HCT116 (cell line): ENCODE measurements at regions of chr15 and their contacts with region 1.

Region 1: GRCh38 chr15:88476635-88477060 is 9.1 kb downstream of the MRPS11 start:
- DNase-seq: peak; percentile 15
- ATAC-seq: peak; percentile 79
- H3K4me3 ChIP-seq: no peak overlapping the region
- H3K27ac ChIP-seq: no peak overlapping the region
- H3K4me1 ChIP-seq: no peaks in the 10 kb centered on the region
- H3K27me3 ChIP-seq: no peaks in the 10 kb centered on the region
- CTCF ChIP-seq: peak; percentile 58 to 73 (median 62)
- POLR2A ChIP-seq: no peak
- RAD21 ChIP-seq: peak; percentile 81

Region 2: GRCh38 chr15:88393719-88394519 is 82.7 kb before region 1 on chr15:
- CTCF ChIA-PET with region 1: no interaction called
- POLR2A ChIA-PET with region 1: no interaction called
- RAD21 ChIA-PET with region 1: no interaction called
- intact Hi-C with region 1: no loop called
- DNase-seq: no peak
- ATAC-seq: no peak
- H3K4me3 ChIP-seq: no peak overlapping the region
- H3K27ac ChIP-seq: no peak overlapping the region
- H3K4me1 ChIP-seq: no peaks in the 10 kb centered on the region
- H3K27me3 ChIP-seq: 0 out of 2 replicates have a peak, but pooled peaks cover 9% of the 10 kb centered on the region
- CTCF ChIP-seq: no peak
- POLR2A ChIP-seq: no peak
- RAD21 ChIP-seq: no peak

Region 3: DNA sequence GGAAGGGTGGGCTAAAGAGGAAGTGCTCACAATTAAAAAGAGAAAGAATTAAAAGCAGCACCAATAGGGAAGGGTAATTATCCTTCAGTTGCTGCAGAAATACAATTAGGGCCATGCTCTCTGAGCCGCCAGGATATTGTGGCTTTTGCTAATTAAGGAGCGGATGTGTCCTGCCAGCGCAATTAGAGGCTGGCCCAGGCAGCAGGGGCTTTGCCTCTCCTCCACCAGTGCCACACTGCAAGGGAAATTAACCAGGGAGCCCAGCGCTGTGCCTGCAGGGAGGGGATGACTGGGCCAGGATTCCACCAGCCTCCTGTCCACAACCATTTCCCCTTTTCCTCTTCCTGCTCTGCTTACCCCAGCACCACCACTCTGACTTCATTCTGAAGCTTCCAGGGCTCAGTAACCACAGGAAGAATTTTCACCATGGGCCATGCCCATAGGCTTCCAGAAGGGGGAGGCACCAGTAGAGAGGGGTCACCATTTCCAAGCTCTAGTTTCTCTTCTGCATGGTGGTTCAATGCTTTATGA is 134.1 kb after region 1 on chr15:
- CTCF ChIA-PET with region 1: interaction called, 7 read pairs
- POLR2A ChIA-PET with region 1: no interaction called
- RAD21 ChIA-PET with region 1: no interaction called
- intact Hi-C with region 1: loop called (anchors 1 kb)
- DNase-seq: no peak
- ATAC-seq: no peak
- H3K4me3 ChIP-seq: no peak overlapping the region
- H3K27ac ChIP-seq: no peak overlapping the region
- H3K4me1 ChIP-seq: peaks cover 0 to 24% of the 10 kb centered on the region in 2 experiments; a peak in 3 of 4 replicates
- H3K27me3 ChIP-seq: peaks cover 40% of the 10 kb centered on the region
- CTCF ChIP-seq: peak in 1 of 3 experiments; percentile 28; a peak in 2 of 6 replicates
- POLR2A ChIP-seq: no peak
- RAD21 ChIP-seq: no peak

Region 4: DNA sequence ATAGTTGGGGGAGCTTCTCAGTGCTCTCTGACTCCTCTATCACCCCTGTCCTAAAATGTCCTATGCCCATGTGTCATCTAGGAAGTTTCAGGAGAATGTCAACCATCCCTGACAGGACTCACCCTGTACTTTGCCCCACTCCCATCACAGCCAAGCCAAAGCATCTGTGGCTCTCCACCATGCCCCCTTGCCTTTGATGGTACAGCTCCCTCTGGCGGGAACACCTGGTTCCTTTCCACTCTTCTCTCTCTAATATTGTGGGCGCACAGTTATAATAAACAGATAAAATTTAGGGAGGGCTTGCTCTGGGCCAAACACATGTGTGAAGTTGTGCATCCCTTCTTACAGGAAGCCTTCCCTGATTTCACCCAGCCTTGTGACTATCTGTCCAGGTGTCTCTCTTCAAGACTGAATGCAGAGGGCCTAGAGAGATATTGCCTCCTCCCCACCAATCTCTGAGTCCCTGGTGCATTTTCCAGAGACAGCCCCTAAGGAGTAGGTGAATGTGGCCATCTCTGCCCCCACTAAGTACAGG is 225.0 kb after region 1 on chr15:
- CTCF ChIA-PET with region 1: no interaction called
- POLR2A ChIA-PET with region 1: no interaction called
- RAD21 ChIA-PET with region 1: no interaction called
- intact Hi-C with region 1: loop called (anchors 1 kb)
- DNase-seq: peak; percentile 15
- ATAC-seq: peak; percentile 93
- H3K4me3 ChIP-seq: no peak overlapping the region
- H3K27ac ChIP-seq: no peak overlapping the region
- H3K4me1 ChIP-seq: no peaks in the 10 kb centered on the region
- H3K27me3 ChIP-seq: peaks cover 45% of the 10 kb centered on the region
- CTCF ChIP-seq: peak; percentile 64 to 73 (median 69)
- POLR2A ChIP-seq: no peak
- RAD21 ChIP-seq: peak; percentile 78

Region 5: GRCh38 chr15:88834211-88834812 is 357.7 kb after region 1 on chr15:
- CTCF ChIA-PET with region 1: interaction called, 3 read pairs
- POLR2A ChIA-PET with region 1: no interaction called
- RAD21 ChIA-PET with region 1: no interaction called
- intact Hi-C with region 1: loop called (anchors 1 kb)
- DNase-seq: peak; percentile 22
- ATAC-seq: peak; percentile 89
- H3K4me3 ChIP-seq: no peak overlapping the region
- H3K27ac ChIP-seq: no peak overlapping the region
- H3K4me1 ChIP-seq: peaks cover 0 to 3% of the 10 kb centered on the region in 2 experiments; a peak in 1 of 4 replicates
- H3K27me3 ChIP-seq: no peaks in the 10 kb centered on the region
- CTCF ChIP-seq: peak; percentile 70 to 89 (median 79)
- POLR2A ChIP-seq: no peak
- RAD21 ChIP-seq: peak; percentile 89